Left cardiac atrium (tissue), 4 donors: ENCODE measurements at regions of chr22 and their contacts with region 1.

Region 1: GRCh38 chr22:20268279-20269012 is at the start of gene RTN4R:
- DNase-seq: peak; percentile 70
- ATAC-seq: peak; percentile 83 to 88
- total RNA-seq, gene RTN4R: 1.4 to 1.8 TPM

Region 2: DNA sequence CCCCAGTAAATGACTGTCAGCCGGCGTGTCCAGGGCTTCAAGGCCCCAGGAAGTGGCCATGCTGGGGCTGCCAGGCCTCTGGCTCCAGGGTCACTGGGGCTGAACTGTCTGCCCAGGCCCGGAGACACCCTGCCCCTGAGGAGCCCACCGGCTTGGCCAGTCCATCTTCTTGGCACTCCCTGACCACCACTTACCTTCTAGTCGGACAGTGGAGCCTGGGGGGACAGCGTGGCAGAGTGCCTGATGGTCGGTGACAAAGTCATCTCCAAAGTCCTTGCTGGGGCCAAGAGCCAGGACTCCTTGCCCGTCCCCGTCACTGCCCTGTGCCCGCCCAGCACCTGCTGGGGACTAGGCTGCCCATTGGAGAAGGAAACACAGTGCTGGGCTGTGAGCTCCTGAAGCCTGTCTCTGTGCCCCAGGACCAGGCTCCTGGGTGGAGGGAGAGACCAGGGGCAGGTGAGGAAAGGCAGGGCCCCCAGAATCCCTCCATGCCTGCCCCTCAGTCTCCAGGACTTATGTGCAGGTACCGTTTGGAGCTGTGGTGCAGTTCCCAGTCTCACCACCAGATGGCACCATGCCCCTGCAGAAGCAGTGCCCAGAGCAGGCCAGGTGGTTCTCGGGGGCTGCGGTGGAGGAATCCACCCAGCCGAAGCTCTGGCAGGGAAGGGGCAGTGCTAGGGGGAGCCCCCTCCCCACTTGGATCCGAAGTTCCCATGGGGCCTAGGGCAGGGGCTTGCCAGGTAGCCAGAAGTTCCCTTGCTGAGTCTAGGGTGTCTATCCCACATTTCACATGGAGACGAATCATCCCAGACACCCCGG is 111.6 kb before region 1 on chr22:
- intact Hi-C with region 1: loop called (anchors 5 kb)
- DNase-seq: peak; percentile 81
- ATAC-seq: peak; percentile 75 to 83

Region 3: GRCh38 chr22:20174785-20175596 is 93.5 kb before region 1 on chr22:
- intact Hi-C with region 1: loop called in 1 of 2 experiments (anchors 5 kb)
- DNase-seq: no peak
- ATAC-seq: peak in 1 of 2 donors; percentile 18

Region 4: GRCh38 chr22:20205964-20206708 is 62.3 kb before region 1 on chr22:
- intact Hi-C with region 1: loop called in 1 of 2 experiments (anchors 10 kb)
- DNase-seq: peak; percentile 79
- ATAC-seq: peak; percentile 79 to 86